ENCODE measurements at regions of chr20 and their contacts with region 1.

Region 1: GRCh38 chr20:16821211-16822089 is 73.3 kb downstream of the OTOR start:
- H3K4me3 ChIP-seq: no peak overlapping the region
- H3K27ac ChIP-seq: no peak overlapping the region
- H3K4me1 ChIP-seq: no peaks in the 10 kb centered on the region
- CTCF ChIP-seq: no peak

Region 2: GRCh38 chr20:16801919-16802911 is 19.2 kb before region 1 on chr20:
- CTCF ChIA-PET with region 1: interaction called, 133 read pairs
- POLR2A ChIA-PET with region 1: no interaction called
- H3K4me3 ChIP-seq: no peak overlapping the region
- H3K27ac ChIP-seq: no peak overlapping the region
- H3K4me1 ChIP-seq: no peaks in the 10 kb centered on the region
- CTCF ChIP-seq: no peak

Region 3: GRCh38 chr20:16810216-16810615 is 11.2 kb before region 1 on chr20:
- CTCF ChIA-PET with region 1: interaction called, 133 read pairs
- POLR2A ChIA-PET with region 1: no interaction called
- H3K4me3 ChIP-seq: no peak overlapping the region
- H3K27ac ChIP-seq: no peak overlapping the region
- H3K4me1 ChIP-seq: no peaks in the 10 kb centered on the region
- CTCF ChIP-seq: no peak

Region 4: GRCh38 chr20:17024513-17025119 is 203.2 kb after region 1 on chr20:
- CTCF ChIA-PET with region 1: no interaction called
- POLR2A ChIA-PET with region 1: no interaction called
- H3K4me3 ChIP-seq: no peak overlapping the region
- H3K27ac ChIP-seq: no peak overlapping the region
- H3K4me1 ChIP-seq: no peaks in the 10 kb centered on the region
- CTCF ChIP-seq: no peak